Tibial artery (tissue), 4 donors: ENCODE measurements at regions of chr6 and their contacts with region 1.

Region 1: DNA sequence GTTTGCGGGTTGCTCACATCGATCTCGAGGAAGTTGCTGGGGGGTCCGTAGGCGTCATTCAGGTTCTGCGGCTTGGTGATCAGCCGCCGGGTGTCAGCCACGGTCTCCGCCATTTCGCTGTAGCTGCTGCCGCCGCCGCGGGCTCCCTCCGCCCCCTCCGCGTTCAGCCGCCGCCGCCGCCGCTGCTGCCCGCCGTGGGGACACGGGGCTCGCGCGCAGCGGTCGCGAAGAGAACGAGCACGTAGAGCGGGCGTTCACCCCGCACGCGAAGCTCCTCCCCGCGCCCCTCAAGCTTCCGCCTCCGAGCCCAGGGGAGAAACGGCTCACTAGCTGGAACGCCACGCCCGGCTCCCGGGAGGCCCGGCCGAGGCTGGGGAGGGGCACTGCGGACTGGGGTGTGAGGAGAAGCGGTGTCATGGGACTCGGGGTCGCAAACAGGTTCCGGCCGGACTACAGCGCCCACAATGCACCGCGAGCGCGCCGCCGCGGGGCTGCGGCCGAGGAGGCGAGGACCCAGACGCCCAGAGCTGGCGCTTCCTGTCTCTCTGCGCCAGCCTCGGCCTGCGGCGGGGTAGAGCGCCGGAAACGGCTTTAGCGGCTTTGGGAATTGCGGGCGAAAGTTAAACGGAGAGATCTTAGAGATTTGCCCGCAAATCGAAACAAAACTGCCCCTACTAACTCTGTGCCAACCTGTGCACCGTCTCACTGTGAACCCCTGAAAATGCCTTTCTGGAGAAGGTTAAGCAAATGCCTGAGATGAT is at the start of gene SNX3:
- DNase-seq: peak; percentile 96 to 98
- H3K4me3 ChIP-seq: peak within 1 kb of the TSS; percentile 69 to 95
- H3K27ac ChIP-seq: peak within 1 kb of the TSS; percentile 94 to 97
- H3K4me1 ChIP-seq: peaks cover 0 to 39% (median 17%) of the 10 kb centered on the region in 4 donors
- H3K27me3 ChIP-seq: no peaks in the 10 kb centered on the region
- CTCF ChIP-seq: no peak

Region 2: GRCh38 chr6:108074359-108075144 is 186.4 kb before region 1 on chr6 and contains the start of gene OSTM1:
- intact Hi-C with region 1: loop called (anchors 5 kb)
- DNase-seq: peak; percentile 84 to 94
- H3K4me3 ChIP-seq: peak within 1 kb of the TSS; percentile 96 to 99
- H3K27ac ChIP-seq: peak within 1 kb of the TSS; percentile 77 to 81
- H3K4me1 ChIP-seq: peaks cover 0 to 23% (median 8%) of the 10 kb centered on the region in 4 donors
- H3K27me3 ChIP-seq: no peaks in the 10 kb centered on the region
- CTCF ChIP-seq: no peak

Region 3: DNA sequence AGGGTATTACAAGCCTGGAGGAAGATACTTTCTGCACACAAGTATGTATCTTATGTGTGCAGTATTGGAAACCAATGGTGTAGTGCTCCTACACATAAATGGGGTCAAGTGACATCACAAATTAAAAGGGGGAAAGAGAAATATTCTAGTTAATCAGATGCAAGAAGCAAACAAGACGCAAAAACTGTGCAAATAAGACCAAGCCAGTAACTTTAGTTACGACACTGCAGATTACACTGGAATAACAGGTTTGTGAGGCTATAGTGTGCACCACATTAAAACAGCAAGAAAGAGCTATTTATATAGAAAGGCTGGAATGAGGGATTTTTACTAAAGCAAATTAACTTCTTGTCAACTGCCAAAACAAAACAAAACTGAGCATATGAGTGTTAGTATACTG is 49.3 kb before region 1 on chr6:
- intact Hi-C with region 1: no loop called
- DNase-seq: no peak
- H3K4me3 ChIP-seq: no peak overlapping the region
- H3K27ac ChIP-seq: no peak overlapping the region
- H3K4me1 ChIP-seq: no peaks in the 10 kb centered on the region
- H3K27me3 ChIP-seq: no peaks in the 10 kb centered on the region
- CTCF ChIP-seq: no peak

Region 4: DNA sequence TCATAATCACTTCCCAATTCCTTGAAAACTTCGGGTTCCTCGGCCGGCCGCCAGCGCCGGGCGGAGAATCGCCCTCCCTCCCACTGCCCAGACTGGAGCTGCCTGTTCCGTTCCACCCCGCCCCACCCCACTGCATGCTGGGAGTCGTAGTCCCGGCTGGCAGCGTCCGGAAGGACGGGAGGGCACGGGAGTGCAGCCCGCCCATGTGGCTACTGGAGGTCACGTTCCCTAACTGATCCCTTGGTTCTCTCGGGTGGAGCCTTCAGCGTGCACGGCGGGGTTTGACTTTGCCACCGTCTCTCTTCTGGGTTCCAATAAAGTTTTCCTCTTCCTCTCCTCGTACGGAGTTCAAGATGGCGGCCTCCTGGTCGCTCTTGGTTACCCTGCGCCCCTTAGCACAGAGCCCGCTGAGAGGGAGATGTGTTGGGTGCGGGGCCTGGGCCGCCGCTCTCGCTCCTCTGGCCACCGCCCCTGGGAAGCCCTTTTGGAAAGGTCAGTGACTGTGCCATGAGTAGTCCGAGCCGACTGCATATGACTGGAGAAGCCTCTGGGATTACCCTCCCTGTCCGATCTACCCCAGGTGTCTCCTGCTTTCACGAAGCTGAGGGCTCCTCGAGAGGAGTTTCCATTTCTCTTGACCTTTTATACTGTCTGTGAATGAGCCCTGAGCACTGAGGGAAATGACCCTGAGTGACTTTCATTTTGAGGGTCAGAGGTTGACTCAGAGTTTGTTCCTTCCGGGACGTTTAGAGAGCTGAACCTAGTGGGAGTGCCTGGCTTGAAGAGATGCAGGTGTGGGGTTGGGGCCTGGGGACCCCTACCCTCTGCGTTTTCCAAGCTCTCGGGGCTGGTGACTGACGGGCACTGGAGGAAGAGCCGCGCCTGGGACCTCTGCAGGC is 34.0 kb after region 1 on chr6 and contains the start of gene AFG1L:
- intact Hi-C with region 1: loop called (anchors 2 kb)
- DNase-seq: peak; percentile 94 to 95
- H3K4me3 ChIP-seq: peak within 1 kb of the TSS; percentile 64 to 73
- H3K27ac ChIP-seq: peak within 1 kb of the TSS; percentile 82
- H3K4me1 ChIP-seq: peaks cover 0 to 6% (median 5%) of the 10 kb centered on the region in 4 donors
- H3K27me3 ChIP-seq: no peaks in the 10 kb centered on the region
- CTCF ChIP-seq: no peak